Activated naive CD4-positive, alpha-beta T cell treated with anti-CD3 and anti-CD28 coated beads for 36 hours (primary cell): ENCODE measurements at regions of chr6 and their contacts with region 1.

Region 1: DNA sequence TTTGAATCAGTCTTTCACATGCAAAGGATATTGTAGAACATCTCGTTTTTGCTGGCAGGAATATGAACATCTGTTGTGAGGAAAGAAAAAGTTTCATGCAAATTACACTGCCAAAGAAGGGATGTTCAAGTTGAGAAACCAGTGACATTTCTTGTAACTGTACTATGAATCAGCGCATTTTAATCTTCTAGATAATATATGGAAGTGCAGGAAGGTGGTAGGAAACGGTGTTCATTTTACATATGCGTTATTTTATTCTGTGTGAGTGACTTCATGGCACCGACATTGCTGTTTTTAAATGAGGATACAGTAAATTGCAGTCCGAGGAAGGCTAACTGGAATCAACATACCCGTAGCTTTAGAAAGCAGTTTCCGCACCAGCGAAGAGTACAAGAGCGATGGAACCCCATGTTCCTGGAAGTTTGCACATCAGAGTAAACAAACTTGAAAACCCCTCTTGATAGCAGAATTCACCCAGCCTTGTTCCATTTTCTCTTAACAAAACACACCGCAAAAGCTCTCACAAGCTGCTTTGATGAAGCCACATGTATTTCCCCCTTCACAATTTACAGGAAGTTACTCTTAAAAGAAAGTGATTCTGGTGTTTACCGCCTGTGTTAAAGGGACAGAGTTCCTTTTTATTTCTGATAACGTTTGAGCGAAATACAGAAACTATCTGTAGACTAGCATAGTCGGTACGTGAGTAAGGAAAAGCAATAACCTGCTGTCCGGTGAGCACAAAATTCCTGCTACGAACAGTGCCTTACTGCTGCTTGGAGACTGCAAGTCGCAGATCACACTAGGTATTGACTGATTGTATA is 11.5 kb downstream of the PRDM1 start:
- DNase-seq: peak; percentile 74
- H3K4me3 Mint-ChIP-seq: peak overlapping the region; percentile 77
- H3K27ac Mint-ChIP-seq: peak overlapping the region; percentile 98
- H3K4me1 Mint-ChIP-seq: peaks cover 84% of the 10 kb centered on the region
- H3K27me3 Mint-ChIP-seq: peaks cover 10% of the 10 kb centered on the region

Region 2: GRCh38 chr6:105646391-105646867 is 451.2 kb before region 1 on chr6:
- CTCF ChIA-PET with region 1: no interaction called
- intact Hi-C with region 1: loop called (anchors 1 kb)
- DNase-seq: peak; percentile 35
- H3K4me3 Mint-ChIP-seq: no peak overlapping the region
- H3K27ac Mint-ChIP-seq: no peak overlapping the region
- H3K4me1 Mint-ChIP-seq: peaks cover 46% of the 10 kb centered on the region
- H3K27me3 Mint-ChIP-seq: peaks cover 20% of the 10 kb centered on the region

Region 3: DNA sequence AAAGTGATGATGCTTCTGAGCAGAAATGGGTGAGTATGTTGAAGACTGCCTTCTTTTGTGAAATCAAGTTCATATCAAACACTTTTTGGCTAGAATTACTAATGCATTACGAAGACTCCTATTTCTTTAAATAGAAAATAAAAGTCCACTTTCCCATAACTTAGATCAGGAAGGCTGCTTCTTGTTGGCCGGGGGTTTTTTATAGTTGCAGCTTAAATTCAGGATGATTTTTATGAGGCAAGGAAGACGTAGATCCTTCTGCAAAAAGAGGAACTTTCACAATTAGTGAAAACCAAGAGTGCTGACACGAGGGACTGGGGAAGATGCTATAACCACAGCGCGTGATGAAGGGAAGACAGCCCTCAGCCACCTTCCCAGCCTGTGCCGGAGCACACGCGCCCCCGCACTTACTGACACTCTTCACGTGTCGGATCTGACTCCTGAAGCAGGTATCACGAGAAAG is 217.6 kb before region 1 on chr6:
- CTCF ChIA-PET with region 1: interaction called, 3 read pairs
- intact Hi-C with region 1: loop called (anchors 1 kb)
- DNase-seq: peak; percentile 74
- H3K4me3 Mint-ChIP-seq: peak overlapping the region; percentile 11
- H3K27ac Mint-ChIP-seq: peak overlapping the region; percentile 78
- H3K4me1 Mint-ChIP-seq: peaks cover 25% of the 10 kb centered on the region
- H3K27me3 Mint-ChIP-seq: peaks cover 30% of the 10 kb centered on the region

Region 4: GRCh38 chr6:106063448-106063850 is 34.2 kb before region 1 on chr6:
- CTCF ChIA-PET with region 1: no interaction called
- intact Hi-C with region 1: no loop called
- DNase-seq: no peak
- H3K4me3 Mint-ChIP-seq: no peak overlapping the region
- H3K27ac Mint-ChIP-seq: no peak overlapping the region
- H3K4me1 Mint-ChIP-seq: no peaks in the 10 kb centered on the region
- H3K27me3 Mint-ChIP-seq: no peaks in the 10 kb centered on the region

Region 5: DNA sequence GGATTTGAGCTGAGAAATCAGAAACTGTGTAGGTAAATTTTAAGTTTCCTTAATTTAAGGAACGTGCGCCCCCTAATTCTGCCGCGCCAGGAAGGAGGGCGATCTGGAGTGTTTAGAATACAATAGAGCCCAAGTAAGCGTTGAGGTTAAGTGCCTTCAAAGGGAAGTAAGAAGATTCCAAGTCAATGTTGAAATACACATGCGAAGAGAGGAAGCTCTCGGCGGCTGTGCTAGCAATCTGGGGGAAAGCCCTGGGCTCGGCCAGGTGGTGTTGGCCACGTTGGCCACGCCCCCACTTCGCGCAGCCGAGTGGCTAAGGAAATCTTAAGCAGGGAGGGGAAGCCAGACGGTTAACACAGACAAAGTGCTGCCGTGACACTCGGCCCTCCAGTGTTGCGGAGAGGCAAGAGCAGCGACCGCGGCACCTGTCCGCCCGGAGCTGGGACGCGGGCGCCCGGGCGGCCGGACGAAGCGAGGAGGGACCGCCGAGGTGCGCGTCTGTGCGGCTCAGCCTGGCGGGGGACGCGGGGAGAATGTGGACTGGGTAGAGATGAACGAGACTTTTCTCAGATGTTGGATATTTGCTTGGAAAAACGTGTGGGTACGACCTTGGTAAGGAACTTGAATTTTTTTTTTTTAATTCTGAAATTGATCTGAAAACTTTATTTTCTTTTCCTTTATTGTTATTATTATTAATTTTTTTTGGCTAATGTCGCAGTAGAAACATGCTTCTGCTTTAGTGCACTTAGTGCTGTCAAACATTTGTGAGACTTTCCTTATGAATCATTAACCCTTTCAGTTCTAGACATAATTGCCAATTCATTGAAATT is 11.4 kb before region 1 on chr6 and contains the start of gene PRDM1:
- CTCF ChIA-PET with region 1: interaction called, 4 read pairs
- intact Hi-C with region 1: loop called (anchors 1 kb)
- DNase-seq: peak; percentile 87
- H3K4me3 Mint-ChIP-seq: peak within 1 kb of the TSS; percentile 75
- H3K27ac Mint-ChIP-seq: peak within 1 kb of the TSS; percentile 6
- H3K4me1 Mint-ChIP-seq: peaks cover 51% of the 10 kb centered on the region
- H3K27me3 Mint-ChIP-seq: peaks cover 46% of the 10 kb centered on the region
- total RNA-seq, gene PRDM1: 3.4 to 4.0 TPM

Region 6: DNA sequence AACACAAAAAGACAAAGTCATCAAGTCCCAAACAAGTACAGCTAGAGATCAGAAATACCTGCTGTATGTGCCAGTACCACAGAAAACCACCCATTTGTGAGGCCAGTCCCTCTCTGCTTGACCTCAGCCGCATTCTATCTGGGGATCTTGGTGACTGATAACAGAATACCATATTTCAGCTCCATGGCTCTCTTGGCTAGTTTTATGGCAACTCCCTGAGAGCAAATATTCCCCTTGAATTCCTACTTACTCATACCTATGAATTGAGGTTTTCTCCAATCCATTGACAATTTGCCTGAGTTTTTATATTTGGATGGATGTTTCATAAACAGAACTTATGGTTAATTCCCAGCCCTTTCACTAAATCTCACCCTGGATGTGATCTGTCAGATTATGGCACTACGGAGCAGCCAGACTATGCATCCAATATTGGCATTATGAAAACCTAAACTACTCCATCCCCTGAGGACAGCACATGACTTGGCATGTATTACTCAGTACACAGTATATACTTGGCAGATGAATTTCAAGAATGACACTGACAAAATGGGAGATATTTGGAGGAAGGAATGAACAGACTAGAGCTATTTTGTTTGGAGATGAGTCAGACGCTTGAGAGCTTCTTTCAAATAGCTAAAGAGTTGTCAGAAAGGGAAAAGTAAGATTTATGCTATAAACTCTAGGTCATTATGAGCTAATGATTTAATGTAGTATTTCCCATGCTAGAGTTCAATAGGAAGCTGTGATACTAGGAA is 84.2 kb after region 1 on chr6:
- CTCF ChIA-PET with region 1: interaction called, 5 read pairs
- intact Hi-C with region 1: loop called (anchors 1 kb)
- DNase-seq: no peak
- H3K4me3 Mint-ChIP-seq: no peak overlapping the region
- H3K27ac Mint-ChIP-seq: no peak overlapping the region
- H3K4me1 Mint-ChIP-seq: peaks cover 33% of the 10 kb centered on the region
- H3K27me3 Mint-ChIP-seq: no peaks in the 10 kb centered on the region

Region 7: DNA sequence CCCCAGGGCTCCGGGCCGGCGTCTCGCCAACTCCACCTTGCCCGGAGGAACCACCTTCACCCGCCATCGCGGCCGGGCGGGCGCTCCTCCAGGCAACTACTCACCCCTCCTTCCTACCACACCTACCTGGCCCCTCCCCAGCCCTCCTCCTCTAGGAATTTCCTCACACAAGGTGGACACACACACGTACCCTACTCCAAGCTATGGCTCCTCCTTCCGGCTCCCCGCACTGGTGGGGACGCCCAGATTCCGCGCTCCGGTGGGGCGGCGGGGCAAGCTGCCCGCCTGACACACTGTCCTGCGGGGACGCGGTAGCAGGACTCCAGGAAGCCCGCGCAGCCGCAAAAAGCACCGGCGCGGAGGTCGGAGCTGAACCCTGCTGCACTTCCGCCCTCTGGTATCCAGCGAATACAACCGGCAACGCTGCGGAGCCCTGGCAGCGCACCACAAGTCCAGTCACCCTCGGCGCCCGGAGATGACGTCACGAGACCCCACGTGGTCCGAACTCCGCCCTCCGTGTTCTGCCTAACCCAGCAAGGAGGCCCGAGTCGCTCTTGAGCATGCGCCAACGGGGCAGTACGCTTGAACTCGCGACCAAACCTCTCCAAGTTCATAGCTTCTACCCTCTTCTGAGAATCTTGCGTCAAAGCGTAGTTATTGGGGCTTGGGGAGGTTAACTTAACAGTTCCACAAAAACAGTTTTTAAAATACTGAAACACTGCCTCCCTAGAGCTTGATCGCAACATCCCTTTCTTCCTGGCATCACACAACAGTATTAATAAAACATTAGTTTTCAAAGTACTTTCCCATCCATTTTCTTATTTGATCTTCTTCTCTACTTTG is 227.9 kb after region 1 on chr6 and contains the start of gene ATG5:
- CTCF ChIA-PET with region 1: no interaction called
- intact Hi-C with region 1: loop called (anchors 1 kb)
- DNase-seq: peak; percentile 100
- H3K4me3 Mint-ChIP-seq: peak within 1 kb of the TSS; percentile 99
- H3K27ac Mint-ChIP-seq: peak within 1 kb of the TSS; percentile 89
- H3K4me1 Mint-ChIP-seq: peaks cover 39% of the 10 kb centered on the region
- H3K27me3 Mint-ChIP-seq: no peaks in the 10 kb centered on the region
- total RNA-seq, gene ATG5: 20.2 to 20.7 TPM

Region 8: GRCh38 chr6:107731422-107732319 is 1634.0 kb after region 1 on chr6:
- CTCF ChIA-PET with region 1: no interaction called
- intact Hi-C with region 1: loop called (anchors 10 kb)
- DNase-seq: peak; percentile 43
- H3K4me3 Mint-ChIP-seq: peak overlapping the region; percentile 80
- H3K27ac Mint-ChIP-seq: peak overlapping the region; percentile 86
- H3K4me1 Mint-ChIP-seq: peaks cover 74% of the 10 kb centered on the region
- H3K27me3 Mint-ChIP-seq: no peaks in the 10 kb centered on the region